ENCODE measurements at regions of chr5 and their contacts with region 1.

Region 1: DNA sequence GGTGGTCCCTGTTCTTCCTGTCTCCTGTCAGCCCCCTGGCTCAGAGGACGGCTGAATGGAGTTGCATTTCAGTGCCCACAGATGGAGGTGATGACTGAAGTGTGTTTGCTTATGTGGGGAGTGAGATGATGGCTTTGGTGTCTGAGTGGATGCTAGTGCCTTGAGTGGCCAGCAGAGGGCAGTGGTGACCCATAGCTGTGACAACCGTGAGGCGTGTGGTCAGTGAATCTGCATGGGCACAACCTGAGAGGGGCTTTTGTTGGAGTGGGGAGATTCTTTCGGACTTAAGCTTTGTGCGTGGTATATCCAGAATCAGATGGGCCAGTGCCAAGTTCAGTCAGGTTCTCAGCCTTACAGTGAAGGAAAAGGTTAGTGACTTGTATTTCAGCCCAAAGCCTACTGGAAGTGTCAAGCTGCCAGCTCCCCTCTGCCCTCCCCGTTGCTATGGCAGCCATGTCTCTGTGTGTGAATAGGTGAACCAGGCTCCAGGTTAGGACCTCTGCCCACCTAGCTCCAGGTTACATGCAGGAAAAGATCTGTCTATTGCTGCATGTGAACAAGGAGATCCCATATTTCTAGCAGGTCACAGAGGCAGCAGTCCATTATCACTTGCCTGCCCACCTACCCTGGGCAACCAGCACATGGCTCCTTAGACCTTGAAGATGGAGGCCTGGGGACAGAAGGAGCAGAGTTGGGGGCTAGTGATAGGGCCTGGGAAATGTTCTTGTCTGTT is 14.7 kb upstream of the CXXC5 start:
- DNase-seq: peak; percentile 39 to 76 (median 61)
- ATAC-seq: peak; percentile 30 to 41
- H3K4me3 Mint-ChIP-seq: no peak overlapping the region
- H3K27ac Mint-ChIP-seq: peak overlapping the region in 9 of 10 donors; percentile 20 to 83 (median 45)
- H3K4me1 Mint-ChIP-seq: peaks cover 26 to 50% (median 45%) of the 10 kb centered on the region in 4 donors
- H3K27me3 Mint-ChIP-seq: no peaks in the 10 kb centered on the region

Region 2: GRCh38 chr5:139560752-139561654 is 72.5 kb before region 1 on chr5 and contains the start of gene UBE2D2:
- POLR2A ChIA-PET with region 1: interaction called, 20 read pairs
- DNase-seq: peak; percentile 95 to 98 (median 98)
- ATAC-seq: peak; percentile 74 to 82
- H3K4me3 Mint-ChIP-seq: peak within 1 kb of the TSS; percentile 92 to 100 (median 99)
- H3K27ac Mint-ChIP-seq: peak within 1 kb of the TSS; percentile 93 to 99 (median 96)
- H3K4me1 Mint-ChIP-seq: peaks cover 10 to 45% (median 33%) of the 10 kb centered on the region in 4 donors
- H3K27me3 Mint-ChIP-seq: no peaks in the 10 kb centered on the region
- polyA plus RNA-seq, gene UBE2D2: 356 to 403 (median 359) TPM

Region 3: DNA sequence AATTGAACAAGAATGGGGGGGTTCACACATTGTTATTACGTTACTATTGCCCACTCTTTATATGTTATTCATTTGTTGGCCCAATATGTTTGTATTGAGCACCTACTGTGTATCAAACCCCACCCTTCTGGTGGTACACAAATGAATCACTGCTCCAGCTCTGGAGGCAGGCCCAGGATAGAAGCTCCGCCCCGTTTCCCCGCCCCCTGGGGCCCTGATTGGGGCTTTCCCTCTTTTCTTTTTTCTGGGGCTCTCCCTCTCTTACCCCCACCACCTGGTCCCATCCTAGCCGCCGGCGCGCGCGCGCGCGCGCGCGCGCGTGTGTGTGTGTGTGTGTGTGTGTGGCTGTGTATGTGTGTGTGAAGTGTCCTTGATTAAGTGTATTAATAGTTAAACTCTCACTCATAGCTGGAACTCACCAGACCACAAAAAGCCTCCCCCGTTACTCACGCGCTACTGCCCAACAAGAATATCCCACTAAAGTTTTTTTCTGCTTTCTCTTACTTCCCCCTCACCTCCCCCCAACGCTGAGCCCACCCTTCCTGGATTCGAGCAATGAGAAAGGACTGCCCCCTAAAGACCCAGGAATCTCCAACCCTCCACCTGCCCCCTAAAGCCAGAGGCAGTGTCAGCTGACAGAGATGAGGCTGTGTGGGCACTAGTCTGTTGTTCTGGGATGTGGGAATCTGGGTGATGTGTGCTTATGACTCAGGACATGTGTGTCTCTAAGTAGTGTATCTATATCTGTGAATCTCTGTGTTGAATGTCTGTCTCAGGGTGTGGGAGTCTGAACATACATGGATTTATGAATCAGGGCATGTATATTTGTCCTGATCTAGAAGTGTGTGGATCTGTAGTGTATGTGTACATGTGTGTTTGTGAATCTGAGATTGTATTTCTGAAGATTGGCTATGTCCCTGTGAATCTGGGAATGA is 18.7 kb after region 1 on chr5:
- POLR2A ChIA-PET with region 1: interaction called, 116 read pairs
- DNase-seq: peak in 8 of 10 donors; percentile 49 to 79 (median 62)
- ATAC-seq: peak; percentile 31 to 64
- H3K4me3 Mint-ChIP-seq: peak overlapping the region in 9 of 10 donors; percentile 16 to 91 (median 63)
- H3K27ac Mint-ChIP-seq: peak overlapping the region in 7 of 10 donors; percentile 3 to 74 (median 13)
- H3K4me1 Mint-ChIP-seq: peaks cover 29 to 76% (median 50%) of the 10 kb centered on the region in 4 donors
- H3K27me3 Mint-ChIP-seq: peaks cover 13 to 53% (median 32%) of the 10 kb centered on the region in 5 donors

Region 4: GRCh38 chr5:139684881-139685749 is 51.7 kb after region 1 on chr5:
- POLR2A ChIA-PET with region 1: interaction called, 41 read pairs
- DNase-seq: no peak
- ATAC-seq: peak; percentile 36 to 49
- H3K4me3 Mint-ChIP-seq: peak overlapping the region in 1 of 10 donors; percentile 3
- H3K27ac Mint-ChIP-seq: peak overlapping the region in 3 of 10 donors; percentile 32 to 70 (median 58)
- H3K4me1 Mint-ChIP-seq: peaks cover 19 to 51% (median 28%) of the 10 kb centered on the region in 4 donors
- H3K27me3 Mint-ChIP-seq: no peaks in the 10 kb centered on the region

Region 5: GRCh38 chr5:139711067-139711905 is 77.8 kb after region 1 on chr5:
- POLR2A ChIA-PET with region 1: interaction called, 39 read pairs
- DNase-seq: peak; percentile 28 to 77 (median 64)
- ATAC-seq: peak; percentile 54 to 65
- H3K4me3 Mint-ChIP-seq: peak overlapping the region; percentile 72 to 87 (median 75)
- H3K27ac Mint-ChIP-seq: peak overlapping the region in 8 of 10 donors; percentile 65 to 96 (median 89)
- H3K4me1 Mint-ChIP-seq: peaks cover 14 to 45% (median 39%) of the 10 kb centered on the region in 4 donors
- H3K27me3 Mint-ChIP-seq: no peaks in the 10 kb centered on the region